ENCODE measurements at regions of chr2 and their contacts with region 1.

Region 1: DNA sequence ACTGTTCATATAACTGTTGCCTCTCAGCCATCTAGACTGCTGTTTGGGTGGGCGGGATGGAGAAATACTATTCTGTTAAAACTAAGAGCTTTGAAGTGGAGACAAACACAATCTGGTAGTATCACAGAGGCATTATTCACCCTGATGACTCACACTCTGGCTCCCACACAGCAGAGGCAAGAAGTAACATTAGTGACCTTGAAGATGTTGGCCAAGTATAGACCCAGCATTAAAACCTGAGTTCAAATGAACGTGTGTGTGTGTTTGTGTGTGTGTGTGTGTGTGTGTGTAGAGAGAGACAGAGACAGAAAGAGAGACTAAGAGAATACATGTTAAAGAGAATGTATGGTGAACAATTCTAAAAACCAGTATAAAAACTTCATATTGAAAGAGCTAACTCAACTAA is 22.5 kb upstream of the ACVR1 start:
- DNase-seq: peak in 2 of 9 donors; percentile 54 to 60
- ATAC-seq: peak; percentile 63
- H3K4me3 ChIP-seq: peak overlapping the region; percentile 26
- H3K4me3 Mint-ChIP-seq: peak overlapping the region; percentile 74 to 93 (median 86)
- H3K27ac ChIP-seq: peak overlapping the region; percentile 78
- H3K27ac Mint-ChIP-seq: peak overlapping the region; percentile 94 to 100 (median 98)
- H3K4me1 ChIP-seq: peaks cover 44 to 59% of the 10 kb centered on the region in 2 donors
- H3K4me1 Mint-ChIP-seq: peaks cover 48 to 80% (median 72%) of the 10 kb centered on the region in 7 donors
- H3K27me3 ChIP-seq: no peaks in the 10 kb centered on the region
- H3K27me3 Mint-ChIP-seq: no peaks in the 10 kb centered on the region

Region 2: GRCh38 chr2:157302492-157303099 is 596.0 kb before region 1 on chr2:
- CTCF ChIA-PET with region 1: no interaction called
- POLR2A ChIA-PET with region 1: no interaction called
- intact Hi-C with region 1: loop called in 1 of 2 experiments (anchors 5 kb)
- DNase-seq: peak in 7 of 9 donors; percentile 33 to 72 (median 59)
- ATAC-seq: peak; percentile 89
- H3K4me3 ChIP-seq: no peak overlapping the region
- H3K4me3 Mint-ChIP-seq: peak overlapping the region in 4 of 10 donors; percentile 16 to 54 (median 38)
- H3K27ac ChIP-seq: no peak overlapping the region
- H3K27ac Mint-ChIP-seq: no peak overlapping the region
- H3K4me1 ChIP-seq: peaks cover 0 to 9% of the 10 kb centered on the region in 2 donors
- H3K4me1 Mint-ChIP-seq: peaks cover 7 to 33% (median 23%) of the 10 kb centered on the region in 7 donors
- H3K27me3 ChIP-seq: no peaks in the 10 kb centered on the region
- H3K27me3 Mint-ChIP-seq: peaks cover 0 to 25% (median 0%) of the 10 kb centered on the region in 5 donors

Region 3: DNA sequence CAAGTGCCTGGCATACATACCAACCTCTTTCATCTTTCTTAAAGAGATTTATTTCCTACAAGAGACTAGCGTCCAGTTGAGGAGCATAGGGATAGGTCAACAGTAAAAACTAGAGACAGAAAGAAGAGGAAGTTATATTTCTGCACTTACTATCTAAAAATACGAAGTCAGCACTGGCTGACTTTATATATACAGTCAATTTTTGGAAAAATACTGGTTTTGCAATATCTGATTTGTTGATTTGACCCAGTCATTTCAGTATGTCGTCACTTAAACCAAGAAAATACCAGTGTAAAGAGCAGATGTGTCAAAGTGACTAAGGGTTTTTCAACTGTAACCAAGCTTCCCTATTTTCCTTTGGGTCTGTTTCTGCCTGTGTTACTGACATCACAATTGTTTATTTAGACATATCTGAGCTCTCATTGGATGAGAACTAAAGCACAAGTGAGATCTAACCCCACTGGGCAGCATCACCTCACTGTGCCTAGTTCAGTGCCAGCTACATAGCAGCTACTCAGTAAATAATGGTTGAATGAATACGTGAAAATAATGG is 477.7 kb before region 1 on chr2:
- CTCF ChIA-PET with region 1: no interaction called
- POLR2A ChIA-PET with region 1: no interaction called
- intact Hi-C with region 1: loop called in 1 of 2 experiments (anchors 2 kb)
- DNase-seq: no peak
- ATAC-seq: peak; percentile 74
- H3K4me3 ChIP-seq: no peak overlapping the region
- H3K4me3 Mint-ChIP-seq: peak overlapping the region in 9 of 10 donors; percentile 30 to 75 (median 66)
- H3K27ac ChIP-seq: peak overlapping the region; percentile 86
- H3K27ac Mint-ChIP-seq: peak overlapping the region; percentile 90 to 98 (median 94)
- H3K4me1 ChIP-seq: peaks cover 59% of the 10 kb centered on the region in 2 donors
- H3K4me1 Mint-ChIP-seq: peaks cover 49 to 91% (median 80%) of the 10 kb centered on the region in 7 donors
- H3K27me3 ChIP-seq: no peaks in the 10 kb centered on the region
- H3K27me3 Mint-ChIP-seq: no peaks in the 10 kb centered on the region

Region 4: GRCh38 chr2:157480182-157480961 is 418.2 kb before region 1 on chr2:
- CTCF ChIA-PET with region 1: no interaction called
- POLR2A ChIA-PET with region 1: no interaction called
- intact Hi-C with region 1: loop called in 1 of 2 experiments (anchors 2 kb)
- DNase-seq: peak in 1 of 9 donors; percentile 62
- ATAC-seq: peak; percentile 46
- H3K4me3 ChIP-seq: no peak overlapping the region
- H3K4me3 Mint-ChIP-seq: peak overlapping the region; percentile 11 to 86 (median 50)
- H3K27ac ChIP-seq: no peak overlapping the region
- H3K27ac Mint-ChIP-seq: peak overlapping the region in 7 of 9 donors; percentile 21 to 95 (median 84)
- H3K4me1 ChIP-seq: peaks cover 0 to 25% of the 10 kb centered on the region in 2 donors
- H3K4me1 Mint-ChIP-seq: peaks cover 22 to 81% (median 53%) of the 10 kb centered on the region in 7 donors
- H3K27me3 ChIP-seq: no peaks in the 10 kb centered on the region
- H3K27me3 Mint-ChIP-seq: no peaks in the 10 kb centered on the region

Region 5: GRCh38 chr2:157838442-157839161 is 60.0 kb before region 1 on chr2:
- CTCF ChIA-PET with region 1: interaction called, 3 read pairs
- POLR2A ChIA-PET with region 1: no interaction called
- intact Hi-C with region 1: loop called in 1 of 2 experiments (anchors 5 kb)
- DNase-seq: peak in 2 of 9 donors; percentile 18 to 29
- ATAC-seq: peak; percentile 88
- H3K4me3 ChIP-seq: no peak overlapping the region
- H3K4me3 Mint-ChIP-seq: peak overlapping the region in 6 of 10 donors; percentile 13 to 69 (median 54)
- H3K27ac ChIP-seq: no peak overlapping the region
- H3K27ac Mint-ChIP-seq: peak overlapping the region in 6 of 9 donors; percentile 8 to 82 (median 72)
- H3K4me1 ChIP-seq: peaks cover 0 to 17% of the 10 kb centered on the region in 2 donors
- H3K4me1 Mint-ChIP-seq: peaks cover 24 to 58% (median 54%) of the 10 kb centered on the region in 7 donors
- H3K27me3 ChIP-seq: no peaks in the 10 kb centered on the region
- H3K27me3 Mint-ChIP-seq: no peaks in the 10 kb centered on the region

Region 6: DNA sequence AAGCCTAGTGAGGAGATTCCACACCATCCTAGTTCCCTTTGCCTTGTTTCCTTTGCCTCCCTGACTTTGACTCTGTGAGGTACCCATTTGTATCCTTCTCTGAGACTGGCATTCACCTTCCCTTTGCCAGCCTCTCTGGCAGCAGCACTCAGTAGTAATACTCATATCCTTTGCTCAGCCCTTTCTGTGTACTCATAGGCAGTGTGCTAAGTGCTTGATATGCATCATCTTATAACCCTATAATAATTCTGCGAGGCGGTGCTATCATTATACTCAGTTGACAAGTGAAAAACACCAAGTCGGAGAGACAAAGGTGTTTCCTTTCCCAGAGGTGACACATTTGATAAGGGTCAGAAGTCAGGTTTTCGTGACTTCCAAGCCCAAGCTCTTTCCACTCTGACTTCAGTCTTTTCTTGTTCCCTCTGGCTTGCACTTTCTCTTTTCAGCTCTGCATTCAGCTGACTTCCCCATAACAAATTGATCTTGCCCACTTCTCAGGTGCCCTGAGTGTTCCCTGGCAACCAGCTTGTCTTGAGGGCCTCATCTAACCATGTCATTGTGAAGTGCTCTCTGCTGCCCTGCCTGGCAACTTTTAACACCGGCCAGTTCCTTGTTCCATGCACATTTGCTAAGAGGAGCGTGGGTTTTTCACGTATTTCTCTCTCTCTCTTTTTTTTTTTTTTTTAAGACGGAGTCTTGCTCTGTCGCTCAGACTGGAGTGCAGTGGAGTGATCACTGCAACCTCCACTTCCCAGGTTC is 108.5 kb after region 1 on chr2:
- CTCF ChIA-PET with region 1: interaction called, 7 read pairs
- POLR2A ChIA-PET with region 1: no interaction called
- intact Hi-C with region 1: loop called (anchors 1 kb)
- DNase-seq: peak in 3 of 9 donors; percentile 14 to 20 (median 18)
- ATAC-seq: peak; percentile 55
- H3K4me3 ChIP-seq: no peak overlapping the region
- H3K4me3 Mint-ChIP-seq: no peak overlapping the region
- H3K27ac ChIP-seq: no peak overlapping the region
- H3K27ac Mint-ChIP-seq: peak overlapping the region in 1 of 9 donors; percentile 1
- H3K4me1 ChIP-seq: no peaks in the 10 kb centered on the region
- H3K4me1 Mint-ChIP-seq: peaks cover 5 to 26% (median 8%) of the 10 kb centered on the region in 7 donors
- H3K27me3 ChIP-seq: no peaks in the 10 kb centered on the region
- H3K27me3 Mint-ChIP-seq: peaks cover 0 to 9% (median 2%) of the 10 kb centered on the region in 5 donors

Region 7: DNA sequence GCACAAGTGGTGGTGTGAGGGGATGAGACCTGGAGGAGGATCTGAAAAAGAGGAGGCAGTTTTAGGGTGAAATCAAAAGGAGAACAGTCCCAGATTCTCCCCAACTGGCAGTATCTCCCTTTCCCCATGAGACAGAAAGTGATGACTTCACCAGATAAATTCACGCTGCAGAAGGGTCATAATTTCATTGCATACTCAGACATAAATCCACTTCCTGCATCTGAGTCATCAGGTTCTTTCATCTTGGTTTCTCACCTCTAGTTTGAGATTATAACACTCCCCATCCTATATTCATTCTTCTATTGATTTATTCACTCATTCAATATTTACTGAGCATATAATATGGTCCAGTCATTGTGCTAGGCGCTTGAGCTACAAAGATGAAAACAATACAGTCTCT is 493.3 kb after region 1 on chr2:
- CTCF ChIA-PET with region 1: no interaction called
- POLR2A ChIA-PET with region 1: no interaction called
- intact Hi-C with region 1: no loop called
- DNase-seq: no peak
- ATAC-seq: peak; percentile 36
- H3K4me3 ChIP-seq: no peak overlapping the region
- H3K4me3 Mint-ChIP-seq: no peak overlapping the region
- H3K27ac ChIP-seq: no peak overlapping the region
- H3K27ac Mint-ChIP-seq: no peak overlapping the region
- H3K4me1 ChIP-seq: no peaks in the 10 kb centered on the region
- H3K4me1 Mint-ChIP-seq: peaks cover 0 to 7% (median 5%) of the 10 kb centered on the region in 7 donors
- H3K27me3 ChIP-seq: no peaks in the 10 kb centered on the region
- H3K27me3 Mint-ChIP-seq: peaks cover 3 to 13% (median 11%) of the 10 kb centered on the region in 5 donors

Region 8: GRCh38 chr2:158967731-158968395 is 1069.3 kb after region 1 on chr2:
- CTCF ChIA-PET with region 1: no interaction called
- POLR2A ChIA-PET with region 1: no interaction called
- intact Hi-C with region 1: no loop called
- DNase-seq: no peak
- ATAC-seq: no peak
- H3K4me3 ChIP-seq: no peak overlapping the region
- H3K4me3 Mint-ChIP-seq: peak overlapping the region; percentile 52 to 83 (median 72)
- H3K27ac ChIP-seq: no peak overlapping the region
- H3K27ac Mint-ChIP-seq: no peak overlapping the region
- H3K4me1 ChIP-seq: peaks cover 0 to 9% of the 10 kb centered on the region in 2 donors
- H3K4me1 Mint-ChIP-seq: peaks cover 14 to 21% (median 16%) of the 10 kb centered on the region in 7 donors
- H3K27me3 ChIP-seq: peaks cover 0 to 4% of the 10 kb centered on the region in 2 donors
- H3K27me3 Mint-ChIP-seq: peaks cover 35 to 83% (median 52%) of the 10 kb centered on the region in 5 donors